Right ventricle myocardium superior (tissue), 1 donor: ENCODE measurements at regions of chr15 and their contacts with region 1.

Region 1: DNA sequence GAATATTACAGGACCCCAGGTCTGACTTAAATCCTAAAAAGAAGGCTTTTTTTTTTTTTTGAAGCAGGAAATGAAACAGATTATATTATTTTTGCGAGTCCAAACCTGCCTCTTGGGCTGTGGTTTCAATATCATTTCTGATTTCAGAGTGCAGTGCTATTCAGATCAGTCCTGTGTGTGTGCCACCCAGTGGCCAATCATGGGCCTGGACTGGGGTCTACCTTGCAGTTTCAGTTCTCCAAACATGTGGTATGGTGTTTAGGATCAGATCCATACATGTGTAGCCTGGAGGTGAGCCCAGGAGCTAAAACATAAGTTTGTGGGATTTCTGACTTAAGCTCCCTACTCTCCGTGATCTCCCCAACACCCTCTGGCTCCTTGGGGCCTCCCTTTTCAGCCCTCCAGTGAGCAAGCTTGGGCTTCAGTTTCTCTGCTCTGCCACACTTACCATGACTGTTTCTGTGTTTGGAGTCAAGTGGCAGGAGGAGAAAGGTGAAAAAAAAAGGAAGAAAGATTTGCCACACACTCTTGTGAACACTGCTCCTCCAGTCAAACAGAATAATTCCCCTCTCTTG is 12.1 kb upstream of the THSD4 start:
- DNase-seq: peak; percentile 49
- ATAC-seq: peak; percentile 75

Region 2: GRCh38 chr15:70892002-70892914 is 210.9 kb before region 1 on chr15 and contains the starts of genes LRRC49 and THAP10:
- intact Hi-C with region 1: loop called (anchors 10 kb)
- DNase-seq: peak; percentile 93
- ATAC-seq: peak; percentile 98
- total RNA-seq, gene LRRC49: 45.7 TPM
- total RNA-seq, gene THAP10: 3.9 TPM

Region 3: DNA sequence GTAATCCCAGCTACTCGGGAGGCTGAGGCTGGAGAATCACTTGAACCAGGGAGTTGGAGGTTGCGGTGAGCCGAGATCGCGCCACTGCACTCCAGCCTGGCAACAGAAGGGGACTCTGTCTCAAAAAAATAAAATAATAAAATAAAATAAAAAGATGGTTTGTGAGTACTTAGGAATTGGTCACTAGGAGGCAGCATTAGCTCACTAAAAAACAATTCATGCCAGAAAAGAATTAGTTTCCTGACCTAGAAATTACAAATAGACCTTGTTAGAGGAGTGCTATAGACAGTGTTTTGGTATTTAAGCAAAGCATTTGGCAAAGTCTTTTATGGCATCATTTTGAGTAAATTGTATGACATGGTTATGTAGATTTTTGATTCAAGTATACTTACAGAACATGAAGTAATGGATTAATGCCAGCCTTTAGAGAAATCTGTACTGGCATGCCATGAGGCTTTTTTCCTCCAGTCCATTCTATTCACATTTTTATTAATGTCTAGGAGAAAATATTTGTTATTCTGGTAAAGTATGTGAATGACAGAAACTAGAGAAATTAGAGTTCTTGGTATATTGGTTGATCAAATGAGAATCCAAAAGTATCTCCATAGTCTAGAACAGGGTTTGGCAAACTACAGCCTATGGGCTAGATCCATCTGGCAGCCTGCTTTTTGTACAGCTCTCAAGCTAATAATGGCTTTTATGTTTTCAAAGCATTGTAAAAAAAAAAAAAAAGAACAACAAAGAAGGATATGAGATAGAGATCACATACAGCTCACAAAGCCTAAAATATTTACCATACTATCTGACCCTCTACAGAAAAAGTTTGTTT is 129.0 kb before region 1 on chr15:
- intact Hi-C with region 1: no loop called
- DNase-seq: no peak
- ATAC-seq: no peak

Region 4: GRCh38 chr15:71707230-71708050 is 604.3 kb after region 1 on chr15:
- intact Hi-C with region 1: no loop called
- DNase-seq: no peak
- ATAC-seq: peak; percentile 45